CD8-positive, alpha-beta memory T cell (primary cell): ENCODE measurements at regions of chr10 and their contacts with region 1.

Region 1: DNA sequence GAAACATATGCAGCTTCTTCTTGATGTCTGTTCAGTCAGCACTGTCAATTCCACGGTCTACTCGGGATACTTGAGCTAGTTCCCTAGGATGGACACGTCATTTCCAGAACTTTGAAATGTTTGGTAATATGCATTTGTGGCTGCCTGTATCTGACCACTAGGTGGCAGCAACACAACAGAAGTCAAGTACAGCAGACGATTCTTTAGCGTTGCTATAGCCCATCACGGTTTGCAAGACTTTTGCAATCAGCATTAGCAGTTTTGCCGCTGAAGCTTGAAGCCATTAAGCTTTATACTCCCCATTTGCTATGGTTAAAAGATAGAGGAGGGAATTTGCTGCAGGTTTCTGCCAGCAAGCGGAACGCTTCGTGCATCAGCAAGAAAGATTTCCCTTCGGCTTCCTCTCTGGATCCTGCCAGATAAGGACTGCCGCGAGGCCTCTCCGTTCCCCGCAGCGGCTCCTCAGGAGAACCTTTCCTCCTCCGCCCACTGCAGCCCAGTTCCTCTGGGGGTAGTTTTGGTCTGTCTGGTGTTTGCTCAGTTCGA is 63.5 kb downstream of the ABCC2 start:
- DNase-seq: peak; percentile 47 to 80 (median 66)
- H3K4me3 ChIP-seq: no peak overlapping the region
- H3K4me3 Mint-ChIP-seq: peak overlapping the region in 5 of 7 donors; percentile 32 to 63 (median 62)
- H3K27ac ChIP-seq: no peak overlapping the region
- H3K27ac Mint-ChIP-seq: no peak overlapping the region
- H3K4me1 ChIP-seq: peaks cover 9% of the 10 kb centered on the region
- H3K4me1 Mint-ChIP-seq: peaks cover 5 to 8% (median 8%) of the 10 kb centered on the region in 3 donors
- H3K27me3 ChIP-seq: no peaks in the 10 kb centered on the region
- H3K27me3 Mint-ChIP-seq: peaks cover 0 to 1% of the 10 kb centered on the region in 2 donors

Region 2: DNA sequence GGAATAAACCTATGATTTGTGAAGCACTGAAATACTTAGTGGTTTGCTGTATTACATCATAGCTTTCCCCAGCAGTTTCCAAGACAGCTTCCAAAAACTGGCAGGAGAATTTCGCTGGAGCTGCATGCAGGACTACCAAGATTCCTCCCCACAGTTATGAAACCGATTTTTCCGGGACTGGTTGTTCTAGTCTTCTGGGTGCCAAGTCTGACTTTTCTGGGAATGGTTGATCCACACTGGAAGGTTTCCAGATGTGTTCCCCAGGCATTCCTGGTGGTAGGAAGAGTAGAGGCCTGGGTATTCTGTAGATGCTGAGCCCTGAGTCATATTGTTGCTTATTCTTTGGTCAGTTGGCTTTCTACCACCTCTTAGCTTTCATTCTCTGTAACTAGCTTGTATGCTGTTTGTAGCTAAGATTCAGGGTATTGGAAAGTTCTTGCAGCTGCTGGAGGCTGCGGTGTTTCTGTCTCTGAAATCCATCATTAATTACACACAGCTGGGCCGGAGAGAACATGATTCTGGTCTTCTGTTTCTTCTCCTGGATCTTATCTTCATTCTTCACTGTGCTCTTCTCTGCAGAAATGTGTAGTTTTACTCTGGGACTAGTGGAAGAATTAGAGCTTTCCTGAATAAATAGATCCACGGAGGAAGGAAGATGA is 57.2 kb before region 1 on chr10:
- CTCF ChIA-PET with region 1: no interaction called
- POLR2A ChIA-PET with region 1: no interaction called
- DNase-seq: no peak
- H3K4me3 ChIP-seq: no peak overlapping the region
- H3K4me3 Mint-ChIP-seq: no peak overlapping the region
- H3K27ac ChIP-seq: no peak overlapping the region
- H3K27ac Mint-ChIP-seq: no peak overlapping the region
- H3K4me1 ChIP-seq: no peaks in the 10 kb centered on the region
- H3K4me1 Mint-ChIP-seq: no peaks in the 10 kb centered on the region
- H3K27me3 ChIP-seq: no peaks in the 10 kb centered on the region
- H3K27me3 Mint-ChIP-seq: peaks cover 0 to 6% of the 10 kb centered on the region in 2 donors

Region 3: GRCh38 chr10:99827936-99828335 is 18.0 kb before region 1 on chr10:
- CTCF ChIA-PET with region 1: interaction called, 12 read pairs
- POLR2A ChIA-PET with region 1: no interaction called
- DNase-seq: no peak
- H3K4me3 ChIP-seq: no peak overlapping the region
- H3K4me3 Mint-ChIP-seq: no peak overlapping the region
- H3K27ac ChIP-seq: no peak overlapping the region
- H3K27ac Mint-ChIP-seq: peak overlapping the region in 2 of 8 donors; percentile 3 to 44
- H3K4me1 ChIP-seq: no peaks in the 10 kb centered on the region
- H3K4me1 Mint-ChIP-seq: peaks cover 10 to 12% (median 10%) of the 10 kb centered on the region in 3 donors
- H3K27me3 ChIP-seq: no peaks in the 10 kb centered on the region
- H3K27me3 Mint-ChIP-seq: no peaks in the 10 kb centered on the region

Region 4: DNA sequence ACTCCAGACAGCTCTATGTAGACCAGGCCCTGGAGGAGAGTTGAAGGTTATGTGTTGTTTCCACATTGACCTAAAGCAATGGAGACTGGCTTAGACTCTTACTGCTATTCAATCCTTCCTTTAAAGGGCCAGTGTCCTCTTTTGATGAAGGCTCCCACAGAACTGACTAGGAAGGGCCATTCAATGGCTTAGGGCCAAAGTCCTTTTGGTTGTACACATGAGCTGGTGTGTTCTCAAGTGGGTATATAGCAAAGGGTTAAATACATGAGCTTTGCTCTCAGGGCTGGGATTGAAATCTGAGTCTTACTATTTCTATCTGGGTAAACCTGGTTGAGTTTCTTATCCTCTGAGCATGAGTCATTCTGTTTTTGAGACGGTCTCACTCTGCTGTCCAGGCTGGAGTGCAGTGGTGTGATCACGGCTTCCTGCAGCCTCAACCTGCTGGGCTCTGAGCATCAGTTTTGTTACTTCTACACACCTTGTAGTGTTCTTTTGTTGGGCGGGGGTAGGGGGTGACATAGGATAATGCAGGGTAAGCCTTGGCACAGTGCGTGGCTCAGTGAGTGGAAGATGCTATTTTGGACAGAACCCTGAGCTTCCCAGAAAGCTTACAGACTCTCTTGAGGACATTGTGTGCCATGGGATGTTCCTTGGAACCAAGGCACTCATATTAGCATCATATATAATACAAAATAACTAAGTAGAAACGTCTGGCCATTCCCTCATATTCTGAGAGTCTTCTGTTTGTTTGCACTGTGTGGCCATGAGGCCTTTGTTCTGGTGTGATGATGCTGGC is 26.7 kb after region 1 on chr10:
- CTCF ChIA-PET with region 1: interaction called, 13 read pairs
- POLR2A ChIA-PET with region 1: no interaction called
- DNase-seq: no peak
- H3K4me3 ChIP-seq: no peak overlapping the region
- H3K4me3 Mint-ChIP-seq: no peak overlapping the region
- H3K27ac ChIP-seq: no peak overlapping the region
- H3K27ac Mint-ChIP-seq: no peak overlapping the region
- H3K4me1 ChIP-seq: peaks cover 16% of the 10 kb centered on the region
- H3K4me1 Mint-ChIP-seq: peaks cover 14 to 23% (median 18%) of the 10 kb centered on the region in 3 donors
- H3K27me3 ChIP-seq: no peaks in the 10 kb centered on the region
- H3K27me3 Mint-ChIP-seq: peaks cover 30 to 58% of the 10 kb centered on the region in 2 donors

Region 5: GRCh38 chr10:99966306-99966705 is 120.4 kb after region 1 on chr10:
- CTCF ChIA-PET with region 1: no interaction called
- POLR2A ChIA-PET with region 1: no interaction called
- DNase-seq: no peak
- H3K4me3 ChIP-seq: no peak overlapping the region
- H3K4me3 Mint-ChIP-seq: no peak overlapping the region
- H3K27ac ChIP-seq: no peak overlapping the region
- H3K27ac Mint-ChIP-seq: no peak overlapping the region
- H3K4me1 ChIP-seq: no peaks in the 10 kb centered on the region
- H3K4me1 Mint-ChIP-seq: no peaks in the 10 kb centered on the region
- H3K27me3 ChIP-seq: no peaks in the 10 kb centered on the region
- H3K27me3 Mint-ChIP-seq: peaks cover 0 to 2% of the 10 kb centered on the region in 2 donors

Region 6: GRCh38 chr10:100009793-100010676 is 164.1 kb after region 1 on chr10 and contains the start of gene DNMBP:
- CTCF ChIA-PET with region 1: interaction called, 58 read pairs
- POLR2A ChIA-PET with region 1: interaction called, 3 read pairs
- DNase-seq: peak; percentile 72 to 88 (median 81)
- H3K4me3 ChIP-seq: peak within 1 kb of the TSS; percentile 85
- H3K4me3 Mint-ChIP-seq: peak within 1 kb of the TSS; percentile 86 to 99 (median 91)
- H3K27ac ChIP-seq: peak within 1 kb of the TSS; percentile 33
- H3K27ac Mint-ChIP-seq: peak within 1 kb of the TSS; percentile 47 to 93 (median 81)
- H3K4me1 ChIP-seq: peaks cover 13% of the 10 kb centered on the region
- H3K4me1 Mint-ChIP-seq: peaks cover 33 to 47% (median 33%) of the 10 kb centered on the region in 3 donors
- H3K27me3 ChIP-seq: no peaks in the 10 kb centered on the region
- H3K27me3 Mint-ChIP-seq: no peaks in the 10 kb centered on the region
- total RNA-seq, gene DNMBP: 2.0 to 2.3 TPM

Region 7: DNA sequence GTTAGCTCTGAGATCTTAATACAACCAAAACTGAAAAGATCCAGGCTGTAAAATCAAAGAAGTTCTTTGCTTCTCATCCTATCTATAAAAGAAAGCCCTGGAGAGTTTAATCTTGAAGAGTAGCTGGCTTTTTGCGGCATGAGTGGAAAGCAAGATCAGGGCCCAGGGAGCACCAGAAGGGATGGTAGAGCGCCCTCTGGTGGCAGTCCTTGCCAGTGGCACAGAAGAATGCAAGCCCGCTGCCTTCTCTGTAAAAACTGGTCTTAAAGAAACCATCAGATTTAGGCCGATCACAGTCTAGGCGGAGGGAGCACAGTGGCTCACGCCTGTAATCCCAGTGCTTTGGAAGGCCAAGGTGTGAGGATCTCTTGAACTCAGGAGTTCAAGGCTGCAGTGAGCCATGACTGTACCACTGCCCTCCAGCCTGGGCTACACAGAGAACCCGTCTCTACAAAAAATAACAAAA is 200.1 kb after region 1 on chr10:
- CTCF ChIA-PET with region 1: interaction called, 154 read pairs
- POLR2A ChIA-PET with region 1: no interaction called
- DNase-seq: peak; percentile 52 to 83 (median 68)
- H3K4me3 ChIP-seq: no peak overlapping the region
- H3K4me3 Mint-ChIP-seq: peak overlapping the region in 1 of 7 donors; percentile 18
- H3K27ac ChIP-seq: no peak overlapping the region
- H3K27ac Mint-ChIP-seq: no peak overlapping the region
- H3K4me1 ChIP-seq: no peaks in the 10 kb centered on the region
- H3K4me1 Mint-ChIP-seq: no peaks in the 10 kb centered on the region
- H3K27me3 ChIP-seq: no peaks in the 10 kb centered on the region
- H3K27me3 Mint-ChIP-seq: peaks cover 1 to 16% of the 10 kb centered on the region in 2 donors

Region 8: GRCh38 chr10:100053686-100054460 is 208.0 kb after region 1 on chr10:
- CTCF ChIA-PET with region 1: interaction called, 154 read pairs
- POLR2A ChIA-PET with region 1: no interaction called
- DNase-seq: no peak
- H3K4me3 ChIP-seq: no peak overlapping the region
- H3K4me3 Mint-ChIP-seq: no peak overlapping the region
- H3K27ac ChIP-seq: no peak overlapping the region
- H3K27ac Mint-ChIP-seq: no peak overlapping the region
- H3K4me1 ChIP-seq: no peaks in the 10 kb centered on the region
- H3K4me1 Mint-ChIP-seq: no peaks in the 10 kb centered on the region
- H3K27me3 ChIP-seq: no peaks in the 10 kb centered on the region
- H3K27me3 Mint-ChIP-seq: peaks cover 6 to 26% of the 10 kb centered on the region in 2 donors

Region 9: DNA sequence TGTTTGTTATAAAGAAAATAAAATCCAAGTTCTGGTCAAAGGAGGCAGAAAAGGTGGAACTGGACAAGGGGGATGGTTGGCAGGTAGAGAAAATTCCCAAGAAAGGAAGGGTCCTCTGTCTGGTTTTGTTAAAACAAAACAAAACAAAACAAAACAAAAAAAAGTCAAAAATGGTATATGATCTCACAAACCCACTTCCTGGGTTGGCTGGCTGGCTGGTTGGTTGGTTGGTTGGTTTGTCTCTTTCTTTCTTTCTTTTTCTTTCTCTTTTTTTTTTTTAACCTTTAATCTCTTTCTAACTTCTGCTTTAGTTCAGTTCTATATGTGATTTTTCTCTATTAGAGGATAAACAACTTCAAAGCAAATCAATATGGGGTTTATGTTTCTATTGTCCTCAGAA is 276.9 kb after region 1 on chr10:
- CTCF ChIA-PET with region 1: no interaction called
- POLR2A ChIA-PET with region 1: no interaction called
- DNase-seq: no peak
- H3K4me3 ChIP-seq: no peak overlapping the region
- H3K4me3 Mint-ChIP-seq: no peak overlapping the region
- H3K27ac ChIP-seq: no peak overlapping the region
- H3K27ac Mint-ChIP-seq: peak overlapping the region in 1 of 8 donors; percentile 12
- H3K4me1 ChIP-seq: no peaks in the 10 kb centered on the region
- H3K4me1 Mint-ChIP-seq: peaks cover 6 to 7% (median 7%) of the 10 kb centered on the region in 3 donors
- H3K27me3 ChIP-seq: no peaks in the 10 kb centered on the region
- H3K27me3 Mint-ChIP-seq: peaks cover 12 to 14% of the 10 kb centered on the region in 2 donors

Region 10: GRCh38 chr10:100286051-100287033 is 440.4 kb after region 1 on chr10 and contains the start of gene BLOC1S2:
- CTCF ChIA-PET with region 1: no interaction called
- POLR2A ChIA-PET with region 1: no interaction called
- DNase-seq: peak; percentile 79 to 91 (median 86)
- H3K4me3 ChIP-seq: peak within 1 kb of the TSS; percentile 73
- H3K4me3 Mint-ChIP-seq: peak within 1 kb of the TSS; percentile 98 to 100 (median 99)
- H3K27ac ChIP-seq: peak within 1 kb of the TSS; percentile 82
- H3K27ac Mint-ChIP-seq: peak within 1 kb of the TSS; percentile 92 to 99 (median 99)
- H3K4me1 ChIP-seq: peaks cover 23% of the 10 kb centered on the region
- H3K4me1 Mint-ChIP-seq: peaks cover 24 to 38% (median 29%) of the 10 kb centered on the region in 3 donors
- H3K27me3 ChIP-seq: no peaks in the 10 kb centered on the region
- H3K27me3 Mint-ChIP-seq: peaks cover 0 to 4% of the 10 kb centered on the region in 2 donors
- total RNA-seq, gene BLOC1S2: 69.7 to 73.2 TPM